CD14-positive monocyte (primary cell): ENCODE measurements at regions of chr1 and their contacts with region 1.

Region 1: GRCh38 chr1:150259758-150260669 is 2.4 kb downstream of the CA14 start:
- DNase-seq: no peak
- H3K4me3 ChIP-seq: no peak overlapping the region
- H3K4me3 Mint-ChIP-seq: peak overlapping the region in 1 of 2 donors; percentile 19
- H3K27ac ChIP-seq: no peak overlapping the region
- H3K27ac Mint-ChIP-seq: no peak overlapping the region
- H3K4me1 ChIP-seq: peaks cover 14 to 15% of the 10 kb centered on the region in 2 donors
- H3K4me1 Mint-ChIP-seq: peaks cover 24% of the 10 kb centered on the region
- H3K27me3 ChIP-seq: peaks cover 38 to 44% of the 10 kb centered on the region in 2 donors
- H3K27me3 Mint-ChIP-seq: peaks cover 42 to 51% (median 48%) of the 10 kb centered on the region in 3 donors
- CTCF ChIP-seq: no peak

Region 2: GRCh38 chr1:150281837-150282653 is 22.0 kb after region 1 on chr1 and contains the start of gene CIART:
- intact Hi-C with region 1: loop called in 1 of 2 experiments (anchors 2 kb)
- DNase-seq: peak; percentile 67 to 85 (median 73)
- H3K4me3 ChIP-seq: peak within 1 kb of the TSS; percentile 32 to 78 (median 49)
- H3K4me3 Mint-ChIP-seq: peak within 1 kb of the TSS; percentile 95 to 97
- H3K27ac ChIP-seq: no peak within 1 kb of the TSS
- H3K27ac Mint-ChIP-seq: peak within 1 kb of the TSS in 5 of 7 donors; percentile 51 to 81 (median 63)
- H3K4me1 ChIP-seq: peaks cover 19% of the 10 kb centered on the region in 2 donors
- H3K4me1 Mint-ChIP-seq: peaks cover 17% of the 10 kb centered on the region
- H3K27me3 ChIP-seq: peaks cover 18 to 42% of the 10 kb centered on the region in 2 donors
- H3K27me3 Mint-ChIP-seq: peaks cover 35 to 47% (median 46%) of the 10 kb centered on the region in 3 donors
- CTCF ChIP-seq: no peak
- polyA plus RNA-seq, gene CIART: 0.61 TPM in 1 of 3 donors, not detected in the others

Region 3: DNA sequence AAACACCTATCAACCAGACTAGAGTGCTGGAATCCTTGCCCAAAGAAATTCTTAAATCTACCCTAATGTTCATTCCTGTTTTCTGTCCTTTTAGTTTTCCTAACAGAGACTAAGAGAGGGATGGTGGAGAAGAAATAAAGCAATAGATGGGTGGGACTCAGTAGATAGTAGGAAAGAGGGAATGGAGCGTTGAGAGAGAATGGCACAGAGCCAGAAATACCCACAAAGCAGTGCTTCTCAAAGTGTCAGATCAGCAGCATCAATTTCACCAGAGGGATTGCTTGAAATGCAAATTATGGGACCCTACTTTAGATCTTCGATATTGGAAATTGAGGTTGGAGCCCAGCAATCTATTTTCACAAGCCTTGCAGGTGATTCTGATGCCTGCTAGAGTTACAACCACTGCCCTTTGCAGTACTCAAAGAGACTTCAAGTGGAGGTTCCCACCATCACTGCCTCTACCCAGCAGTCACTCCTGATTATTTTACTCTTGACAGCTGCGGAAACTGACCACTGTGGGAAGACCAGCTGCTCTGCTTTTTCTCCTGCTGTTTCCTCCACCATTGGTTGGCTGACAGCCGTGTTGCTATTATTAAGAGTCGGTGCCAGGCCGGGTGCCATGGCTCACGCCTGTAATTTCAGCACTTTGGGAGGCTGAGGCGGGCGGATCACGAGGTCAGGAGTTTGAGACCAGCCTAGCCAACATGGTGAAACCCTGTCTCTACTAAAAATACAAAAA is 49.9 kb after region 1 on chr1:
- intact Hi-C with region 1: loop called in 1 of 2 experiments (anchors 10 kb)
- DNase-seq: no peak
- H3K4me3 ChIP-seq: no peak overlapping the region
- H3K4me3 Mint-ChIP-seq: no peak overlapping the region
- H3K27ac ChIP-seq: no peak overlapping the region
- H3K27ac Mint-ChIP-seq: no peak overlapping the region
- H3K4me1 ChIP-seq: no peaks in the 10 kb centered on the region
- H3K4me1 Mint-ChIP-seq: no peaks in the 10 kb centered on the region
- H3K27me3 ChIP-seq: no peaks in the 10 kb centered on the region
- H3K27me3 Mint-ChIP-seq: peaks cover 0 to 2% (median 0%) of the 10 kb centered on the region in 3 donors
- CTCF ChIP-seq: no peak